Activated CD4-positive, alpha-beta T cell treated with anti-CD3 and anti-CD28 coated beads, Interleukin-2, amount 10 ng/mL, durations not matched to agents 24 days and 14 days (primary cell): ENCODE measurements at regions of chr20 and their contacts with region 1.

Region 1: DNA sequence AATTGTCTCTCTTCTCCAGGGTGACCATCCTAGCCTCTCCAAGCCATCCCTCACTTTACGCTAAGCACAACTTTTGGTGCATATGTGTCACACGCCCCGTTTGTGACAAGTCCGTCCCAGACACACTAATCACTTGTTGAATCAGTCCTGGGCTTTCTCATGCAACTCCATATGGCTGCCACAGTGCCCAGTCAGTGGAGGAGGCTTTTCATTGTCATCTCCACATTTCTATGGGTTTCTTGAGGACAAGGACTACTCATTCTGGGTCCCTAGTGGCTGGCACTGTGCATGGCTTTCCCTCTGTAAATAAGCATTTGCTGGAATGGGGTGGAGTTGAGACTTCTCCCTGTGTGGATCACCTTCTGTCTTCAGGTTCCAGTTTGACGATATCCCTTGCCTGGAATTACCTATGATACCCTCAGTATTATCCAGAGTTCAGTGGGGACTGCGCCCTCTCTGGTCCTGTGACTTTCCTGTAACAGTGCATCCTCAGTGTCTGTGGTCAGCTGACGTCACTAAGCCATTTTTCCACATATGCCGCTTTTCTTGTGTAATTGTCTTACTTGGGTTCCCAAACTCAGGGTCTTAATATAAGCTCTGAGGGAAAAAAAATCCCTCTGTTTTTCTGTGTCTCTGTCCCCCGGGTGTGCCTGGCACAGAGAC is 59.8 kb upstream of the MYL9 start:
- DNase-seq: no peak
- H3K4me3 Mint-ChIP-seq: no peak overlapping the region
- H3K27ac Mint-ChIP-seq: no peak overlapping the region
- H3K4me1 Mint-ChIP-seq: peaks cover 16% of the 10 kb centered on the region
- H3K27me3 Mint-ChIP-seq: no peaks in the 10 kb centered on the region

Region 2: GRCh38 chr20:36493013-36493800 is 11.7 kb after region 1 on chr20:
- intact Hi-C with region 1: loop called (anchors 1 kb)
- DNase-seq: no peak
- H3K4me3 Mint-ChIP-seq: no peak overlapping the region
- H3K27ac Mint-ChIP-seq: no peak overlapping the region
- H3K4me1 Mint-ChIP-seq: peaks cover 27% of the 10 kb centered on the region
- H3K27me3 Mint-ChIP-seq: no peaks in the 10 kb centered on the region